ENCODE measurements at regions of chr3 and their contacts with region 1.

Region 1: GRCh38 chr3:36957862-36958686 is 13.2 kb upstream of the TRANK1 start:
- DNase-seq: no peak
- ATAC-seq: no peak
- H3K4me3 Mint-ChIP-seq: no peak overlapping the region
- H3K27ac Mint-ChIP-seq: peak overlapping the region; percentile 33
- H3K4me1 Mint-ChIP-seq: peaks cover 20% of the 10 kb centered on the region
- H3K27me3 Mint-ChIP-seq: no peaks in the 10 kb centered on the region
- CTCF ChIP-seq: no peak

Region 2: DNA sequence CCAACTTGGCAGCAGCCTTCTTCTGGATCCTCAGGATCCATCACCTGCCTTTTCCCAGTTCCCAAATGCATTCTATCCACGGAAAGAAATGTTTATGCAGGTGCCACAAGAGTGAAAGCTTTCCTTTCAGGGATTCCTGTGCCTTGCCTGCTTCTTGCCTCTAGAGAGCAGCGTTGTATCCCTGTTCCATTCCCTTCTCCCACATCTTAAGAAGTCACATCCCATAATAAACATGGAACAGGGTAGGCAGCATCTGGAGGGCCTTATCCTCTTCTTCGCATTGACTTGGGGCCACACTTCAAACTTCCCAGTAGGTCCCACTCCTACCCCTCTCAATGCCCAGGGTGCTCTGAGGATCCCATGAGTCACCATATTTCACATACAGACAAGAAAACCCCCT is 121.0 kb before region 1 on chr3:
- CTCF ChIA-PET with region 1: interaction called, 15 read pairs
- POLR2A ChIA-PET with region 1: no interaction called
- intact Hi-C with region 1: loop called (anchors 1 kb)
- DNase-seq: no peak
- ATAC-seq: no peak
- H3K4me3 Mint-ChIP-seq: no peak overlapping the region
- H3K27ac Mint-ChIP-seq: peak overlapping the region; percentile 42
- H3K4me1 Mint-ChIP-seq: no peaks in the 10 kb centered on the region
- H3K27me3 Mint-ChIP-seq: no peaks in the 10 kb centered on the region
- CTCF ChIP-seq: no peak

Region 3: GRCh38 chr3:36876181-36876936 is 81.7 kb before region 1 on chr3:
- CTCF ChIA-PET with region 1: interaction called, 70 read pairs
- POLR2A ChIA-PET with region 1: interaction called, 4 read pairs
- intact Hi-C with region 1: no loop called
- DNase-seq: no peak
- ATAC-seq: peak; percentile 85
- H3K4me3 Mint-ChIP-seq: peak overlapping the region; percentile 75
- H3K27ac Mint-ChIP-seq: peak overlapping the region; percentile 96
- H3K4me1 Mint-ChIP-seq: peaks cover 55% of the 10 kb centered on the region
- H3K27me3 Mint-ChIP-seq: no peaks in the 10 kb centered on the region
- CTCF ChIP-seq: no peak

Region 4: GRCh38 chr3:36911990-36912804 is 45.9 kb before region 1 on chr3:
- CTCF ChIA-PET with region 1: interaction called, 71 read pairs
- POLR2A ChIA-PET with region 1: interaction called, 7 read pairs
- intact Hi-C with region 1: loop called (anchors 2 kb)
- DNase-seq: no peak
- ATAC-seq: peak; percentile 78
- H3K4me3 Mint-ChIP-seq: peak overlapping the region; percentile 41
- H3K27ac Mint-ChIP-seq: peak overlapping the region; percentile 93
- H3K4me1 Mint-ChIP-seq: peaks cover 69% of the 10 kb centered on the region
- H3K27me3 Mint-ChIP-seq: no peaks in the 10 kb centered on the region
- CTCF ChIP-seq: no peak

Region 5: DNA sequence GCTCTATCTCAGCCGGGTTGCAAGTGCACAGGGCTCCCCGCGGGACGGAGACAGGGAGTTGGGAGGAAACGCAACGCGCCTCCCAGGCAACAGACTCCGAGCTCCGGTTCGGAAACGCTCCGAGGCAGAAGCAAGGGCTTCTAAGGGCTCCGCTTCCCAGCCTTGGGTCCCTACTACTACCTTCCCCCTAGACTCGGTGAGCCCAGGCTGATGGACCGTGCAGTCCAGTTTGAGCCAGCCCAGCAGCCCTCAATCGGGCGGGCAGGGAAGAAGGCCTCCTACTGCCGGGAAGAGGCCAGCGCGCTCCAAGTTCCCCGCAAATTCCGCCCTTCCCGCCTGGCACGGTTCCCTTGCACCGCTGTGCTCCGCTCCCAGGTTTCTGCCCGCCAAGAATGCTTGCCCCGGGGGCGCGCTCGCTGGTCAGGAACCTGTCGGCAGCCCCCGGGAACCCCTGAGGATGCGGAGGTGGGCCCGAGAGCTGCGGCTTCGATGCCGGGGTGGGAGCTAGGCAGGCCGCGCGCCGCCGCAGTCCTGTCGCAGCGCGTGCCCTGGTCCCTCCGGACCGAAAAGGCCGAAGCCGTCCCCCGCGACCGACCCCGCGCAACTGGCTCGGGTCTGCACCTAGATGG is 13.9 kb before region 1 on chr3:
- CTCF ChIA-PET with region 1: interaction called, 24 read pairs
- POLR2A ChIA-PET with region 1: interaction called, 11 read pairs
- intact Hi-C with region 1: no loop called
- DNase-seq: no peak
- ATAC-seq: peak; percentile 45
- H3K4me3 Mint-ChIP-seq: peak overlapping the region; percentile 87
- H3K27ac Mint-ChIP-seq: peak overlapping the region; percentile 68
- H3K4me1 Mint-ChIP-seq: peaks cover 26% of the 10 kb centered on the region
- H3K27me3 Mint-ChIP-seq: no peaks in the 10 kb centered on the region
- CTCF ChIP-seq: no peak

Region 6: DNA sequence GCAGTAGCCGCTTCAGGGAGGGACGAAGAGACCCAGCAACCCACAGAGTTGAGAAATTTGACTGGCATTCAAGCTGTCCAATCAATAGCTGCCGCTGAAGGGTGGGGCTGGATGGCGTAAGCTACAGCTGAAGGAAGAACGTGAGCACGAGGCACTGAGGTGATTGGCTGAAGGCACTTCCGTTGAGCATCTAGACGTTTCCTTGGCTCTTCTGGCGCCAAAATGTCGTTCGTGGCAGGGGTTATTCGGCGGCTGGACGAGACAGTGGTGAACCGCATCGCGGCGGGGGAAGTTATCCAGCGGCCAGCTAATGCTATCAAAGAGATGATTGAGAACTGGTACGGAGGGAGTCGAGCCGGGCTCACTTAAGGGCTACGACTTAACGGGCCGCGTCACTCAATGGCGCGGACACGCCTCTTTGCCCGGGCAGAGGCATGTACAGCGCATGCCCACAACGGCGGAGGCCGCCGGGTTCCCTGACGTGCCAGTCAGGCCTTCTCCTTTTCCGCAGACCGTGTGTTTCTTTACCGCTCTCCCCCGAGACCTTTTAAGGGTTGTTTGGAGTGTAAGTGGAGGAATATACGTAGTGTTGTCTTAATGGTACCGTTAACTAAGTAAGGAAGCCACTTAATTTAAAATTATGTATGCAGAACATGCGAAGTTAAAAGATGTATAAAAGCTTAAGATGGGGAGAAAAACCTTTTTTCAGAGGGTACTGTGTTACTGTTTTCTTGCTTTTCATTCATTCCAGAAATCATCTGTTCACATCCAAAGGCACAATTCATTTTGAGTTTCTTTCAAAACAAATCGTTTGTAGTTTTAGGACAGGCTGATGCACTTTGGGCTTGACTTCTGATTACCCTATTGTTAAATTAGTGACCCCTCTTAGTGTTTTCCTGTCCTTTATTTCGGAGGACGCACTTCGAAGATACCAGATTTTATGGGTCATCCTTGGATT is 35.5 kb after region 1 on chr3 and contains the start of gene MLH1:
- CTCF ChIA-PET with region 1: interaction called, 16 read pairs
- POLR2A ChIA-PET with region 1: interaction called, 13 read pairs
- intact Hi-C with region 1: no loop called
- DNase-seq: peak; percentile 90
- ATAC-seq: peak; percentile 86
- H3K4me3 Mint-ChIP-seq: no peak within 1 kb of the TSS
- H3K27ac Mint-ChIP-seq: no peak within 1 kb of the TSS
- H3K4me1 Mint-ChIP-seq: peaks cover 29% of the 10 kb centered on the region
- H3K27me3 Mint-ChIP-seq: no peaks in the 10 kb centered on the region
- CTCF ChIP-seq: no peak
- total RNA-seq, gene MLH1: 45.8 and 46.2 TPM in 2 replicates